Natural killer cell (primary cell): ENCODE measurements at regions of chr2 and their contacts with region 1.

Region 1: DNA sequence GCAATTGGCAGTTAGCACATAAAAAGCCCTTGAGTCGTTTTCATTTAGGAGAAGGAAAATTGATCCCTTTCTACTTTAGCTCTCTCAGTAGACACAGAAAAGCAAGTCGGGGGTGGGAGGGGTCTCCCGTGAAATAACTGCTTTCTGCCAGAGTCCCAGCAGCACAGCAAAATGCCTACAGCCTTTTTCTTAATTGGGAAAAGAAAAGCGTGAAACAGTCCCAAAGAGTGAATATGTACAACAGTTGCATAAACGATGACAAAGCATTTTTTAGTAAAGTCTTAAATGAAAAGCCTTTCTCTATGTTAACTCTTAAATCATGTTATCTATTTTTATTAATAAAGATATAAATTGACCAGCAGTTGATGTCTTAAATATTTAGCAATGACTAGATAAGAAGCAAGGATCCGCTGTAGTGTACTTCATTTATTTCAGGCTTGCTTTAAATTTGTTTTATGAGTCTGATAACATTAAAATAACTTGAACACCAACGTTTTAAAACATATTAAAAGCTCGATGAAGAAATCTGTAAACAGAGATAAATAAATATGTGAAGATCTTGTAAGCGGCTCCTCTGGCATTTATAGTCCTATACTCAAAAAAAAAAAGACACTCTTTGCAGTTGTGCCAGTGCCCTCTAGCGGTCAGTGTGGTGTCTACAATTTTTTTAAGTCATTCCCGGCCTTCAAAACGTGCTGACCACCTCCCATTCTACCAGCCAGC is 42.3 kb upstream of the ATIC start:
- DNase-seq: peak; percentile 26 to 82
- ATAC-seq: peak; percentile 70 to 77 (median 76)
- H3K4me3 ChIP-seq: no peak overlapping the region
- H3K4me3 Mint-ChIP-seq: no peak overlapping the region
- H3K27ac ChIP-seq: no peak overlapping the region
- H3K27ac Mint-ChIP-seq: no peak overlapping the region
- H3K4me1 ChIP-seq: no peaks in the 10 kb centered on the region
- H3K4me1 Mint-ChIP-seq: no peaks in the 10 kb centered on the region
- H3K27me3 ChIP-seq: no peaks in the 10 kb centered on the region
- H3K27me3 Mint-ChIP-seq: peaks cover 0 to 5% of the 10 kb centered on the region in 2 donors
- CTCF ChIP-seq: peak; percentile 94

Region 2: DNA sequence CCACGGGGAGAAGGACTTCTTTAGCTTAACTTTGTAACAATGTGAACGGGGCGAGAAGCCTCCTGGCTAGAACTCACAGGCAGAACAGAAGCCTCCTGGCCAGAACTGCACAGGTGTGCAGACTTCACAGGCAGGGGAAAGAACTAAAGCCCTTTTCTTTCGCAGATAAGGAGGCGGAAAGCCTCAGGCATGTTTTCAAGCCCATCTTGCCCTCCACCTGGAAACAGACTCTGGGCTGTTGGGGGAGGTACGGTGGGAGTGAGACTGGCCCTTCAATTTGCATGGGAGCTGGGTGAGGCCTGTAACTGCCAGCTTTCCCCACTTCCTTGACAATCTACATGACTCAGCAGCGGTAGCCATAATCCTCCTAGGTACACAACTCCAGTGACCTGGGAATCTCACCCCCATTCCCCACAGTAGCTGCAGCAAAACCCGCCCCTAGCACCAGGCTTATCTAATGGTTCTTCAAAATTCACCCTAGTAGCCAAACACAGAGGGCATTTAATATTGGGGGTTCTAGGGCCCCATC is 108.2 kb before region 1 on chr2:
- intact Hi-C with region 1: no loop called
- DNase-seq: no peak
- ATAC-seq: no peak
- H3K4me3 ChIP-seq: no peak overlapping the region
- H3K4me3 Mint-ChIP-seq: no peak overlapping the region
- H3K27ac ChIP-seq: no peak overlapping the region
- H3K27ac Mint-ChIP-seq: no peak overlapping the region
- H3K4me1 ChIP-seq: no peaks in the 10 kb centered on the region
- H3K4me1 Mint-ChIP-seq: no peaks in the 10 kb centered on the region
- H3K27me3 ChIP-seq: no peaks in the 10 kb centered on the region
- H3K27me3 Mint-ChIP-seq: no peaks in the 10 kb centered on the region
- CTCF ChIP-seq: no peak

Region 3: GRCh38 chr2:215238492-215239119 is 31.0 kb before region 1 on chr2:
- intact Hi-C with region 1: no loop called
- DNase-seq: no peak
- ATAC-seq: no peak
- H3K4me3 ChIP-seq: no peak overlapping the region
- H3K4me3 Mint-ChIP-seq: no peak overlapping the region
- H3K27ac ChIP-seq: no peak overlapping the region
- H3K27ac Mint-ChIP-seq: no peak overlapping the region
- H3K4me1 ChIP-seq: no peaks in the 10 kb centered on the region
- H3K4me1 Mint-ChIP-seq: no peaks in the 10 kb centered on the region
- H3K27me3 ChIP-seq: no peaks in the 10 kb centered on the region
- H3K27me3 Mint-ChIP-seq: peaks cover 0 to 6% of the 10 kb centered on the region in 2 donors
- CTCF ChIP-seq: no peak

Region 4: DNA sequence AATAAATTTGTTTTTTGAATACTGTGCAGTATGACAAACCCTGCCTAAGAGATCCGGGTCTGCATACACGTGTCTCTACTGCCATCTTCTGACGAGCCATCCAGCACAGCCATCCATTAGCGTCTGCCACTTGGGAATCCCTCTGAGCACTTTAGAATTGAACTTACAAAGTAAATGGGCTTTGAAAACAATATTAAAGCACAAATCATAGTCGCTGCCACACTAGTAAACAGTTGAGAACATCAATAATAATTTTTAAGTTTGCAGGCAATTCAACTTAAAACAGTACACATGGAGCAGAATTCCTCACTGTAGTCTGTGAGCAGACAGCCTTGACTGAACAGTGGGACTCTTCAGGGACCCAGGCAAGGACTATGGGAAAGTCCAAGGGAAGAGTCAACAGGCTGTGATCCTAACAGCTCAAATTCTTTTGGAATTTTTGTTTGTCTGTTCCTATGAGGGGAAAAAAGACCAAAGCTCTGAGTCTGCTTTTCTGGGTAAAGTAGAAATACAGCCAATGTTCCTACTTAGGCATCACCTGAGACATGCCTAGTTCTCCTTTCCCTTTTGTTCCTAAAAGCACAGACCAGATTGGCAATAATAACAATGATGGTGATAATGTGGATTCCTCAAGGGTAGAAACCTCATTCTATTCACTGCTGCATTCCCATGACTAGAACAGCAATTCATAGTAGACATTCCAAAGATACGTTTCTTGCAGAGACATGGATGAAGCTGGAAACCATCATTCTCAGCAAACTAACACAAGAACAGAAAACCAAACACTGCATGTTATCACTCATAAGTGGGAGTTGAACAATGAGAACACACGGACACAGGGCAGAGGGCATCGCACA is 650.9 kb after region 1 on chr2:
- intact Hi-C with region 1: loop called (anchors 5 kb)
- DNase-seq: peak; percentile 27 to 80
- ATAC-seq: peak; percentile 70 to 91 (median 82)
- H3K4me3 ChIP-seq: no peak overlapping the region
- H3K4me3 Mint-ChIP-seq: no peak overlapping the region
- H3K27ac ChIP-seq: no peak overlapping the region
- H3K27ac Mint-ChIP-seq: no peak overlapping the region
- H3K4me1 ChIP-seq: peaks cover 9% of the 10 kb centered on the region
- H3K4me1 Mint-ChIP-seq: peaks cover 14 to 16% of the 10 kb centered on the region in 2 donors
- H3K27me3 ChIP-seq: no peaks in the 10 kb centered on the region
- H3K27me3 Mint-ChIP-seq: peaks cover 2 to 17% of the 10 kb centered on the region in 2 donors
- CTCF ChIP-seq: peak; percentile 70